Heart left ventricle (tissue), 16 donors: ENCODE measurements at regions of chr1 and their contacts with region 1.

Region 1: GRCh38 chr1:205711104-205712020 is 31.1 kb upstream of the SLC45A3 start:
- DNase-seq: peak in 4 of 5 donors; percentile 40 to 70 (median 62)
- ATAC-seq: peak; percentile 43 to 83 (median 80)
- H3K4me3 ChIP-seq: no peak overlapping the region
- H3K27ac ChIP-seq: no peak overlapping the region
- H3K4me1 ChIP-seq: peaks cover 0 to 28% (median 10%) of the 10 kb centered on the region in 12 donors
- H3K27me3 ChIP-seq: no peaks in the 10 kb centered on the region
- CTCF ChIP-seq: peak; percentile 77 to 95 (median 88)
- POLR2A ChIP-seq: no peak

Region 2: GRCh38 chr1:204446370-204447111 is 1264.8 kb before region 1 on chr1:
- intact Hi-C with region 1: no loop called
- DNase-seq: peak; percentile 71 to 85 (median 83)
- ATAC-seq: peak; percentile 39 to 75 (median 72)
- H3K4me3 ChIP-seq: no peak overlapping the region
- H3K27ac ChIP-seq: peak overlapping the region in 9 of 12 donors; percentile 19 to 62 (median 54)
- H3K4me1 ChIP-seq: peaks cover 7 to 75% (median 52%) of the 10 kb centered on the region in 12 donors
- H3K27me3 ChIP-seq: no peaks in the 10 kb centered on the region
- CTCF ChIP-seq: peak; percentile 70 to 84 (median 79)
- POLR2A ChIP-seq: no peak

Region 3: DNA sequence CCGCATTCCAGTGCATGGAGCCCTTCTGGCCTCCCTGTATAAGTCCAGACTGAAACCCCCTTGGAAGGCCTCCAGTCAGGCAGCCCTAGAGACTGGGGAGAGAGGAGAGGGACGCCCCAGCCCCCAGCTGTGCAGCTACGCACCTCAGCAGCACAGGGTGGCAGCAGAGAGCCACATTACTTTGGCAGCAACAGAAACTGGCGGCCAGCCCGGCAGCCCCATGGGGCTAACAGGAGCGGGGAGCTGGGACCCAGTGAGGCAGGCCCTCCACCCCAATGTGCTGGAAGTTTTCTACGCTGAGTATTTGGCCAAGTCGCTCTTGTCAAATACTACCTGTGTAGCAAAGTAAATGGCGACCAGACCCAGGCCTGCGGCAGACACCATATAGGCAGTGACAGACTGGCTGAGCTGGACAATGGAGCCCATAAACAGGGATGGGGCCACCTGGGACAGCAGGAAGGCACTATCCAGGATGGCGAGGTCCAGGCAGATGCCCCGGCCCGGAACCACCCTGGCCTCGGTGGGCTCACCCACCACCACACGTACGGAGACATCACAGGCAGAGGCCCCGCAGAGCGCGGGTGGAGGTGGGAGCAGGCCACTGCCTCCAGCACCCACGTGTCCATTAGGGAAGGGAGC is 52.3 kb before region 1 on chr1:
- intact Hi-C with region 1: loop called (anchors 1 to 5 kb)
- DNase-seq: peak; percentile 78 to 90 (median 83)
- ATAC-seq: peak; percentile 71 to 88 (median 80)
- H3K4me3 ChIP-seq: no peak overlapping the region
- H3K27ac ChIP-seq: no peak overlapping the region
- H3K4me1 ChIP-seq: peaks cover 0 to 16% (median 6%) of the 10 kb centered on the region in 12 donors
- H3K27me3 ChIP-seq: no peaks in the 10 kb centered on the region
- CTCF ChIP-seq: peak; percentile 77 to 91 (median 85)
- POLR2A ChIP-seq: no peak

Region 4: DNA sequence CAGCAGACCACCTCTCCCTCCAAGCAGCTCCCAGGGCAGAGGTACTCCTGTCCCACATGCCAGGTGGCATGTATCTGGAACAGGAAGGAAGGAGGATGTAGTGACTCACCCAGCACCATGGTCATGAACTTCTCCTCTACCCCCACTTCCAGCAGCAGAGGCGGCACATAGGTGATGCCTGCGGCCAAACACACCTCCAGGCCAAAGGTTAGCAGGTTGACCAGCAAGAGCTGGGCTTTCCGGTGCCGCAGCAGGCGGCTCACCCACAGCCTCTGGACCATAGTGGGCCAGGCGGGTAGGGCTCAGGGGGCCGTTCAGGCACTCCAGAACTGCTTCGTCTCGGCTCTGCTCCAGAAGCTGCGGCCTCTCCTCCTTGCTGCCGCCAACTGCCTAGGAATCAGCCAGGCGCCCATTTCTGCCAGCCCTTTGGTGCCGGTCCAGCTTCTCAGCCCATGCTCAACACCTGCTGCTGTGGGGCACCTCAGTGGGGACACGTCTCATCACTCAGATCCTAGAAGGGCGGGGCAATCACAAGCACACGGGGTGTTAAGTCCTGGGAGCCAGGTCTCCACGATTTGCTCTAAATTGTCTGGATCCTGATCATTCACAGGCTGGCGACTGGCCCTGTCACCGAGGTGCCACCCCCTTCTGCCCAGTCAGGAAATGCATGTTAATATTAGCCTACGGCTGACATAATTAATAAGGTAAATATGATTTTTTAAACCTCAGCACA is 46.8 kb before region 1 on chr1:
- intact Hi-C with region 1: loop called in 9 of 10 experiments (anchors 1 to 5 kb)
- DNase-seq: no peak
- ATAC-seq: no peak
- H3K4me3 ChIP-seq: no peak overlapping the region
- H3K27ac ChIP-seq: no peak overlapping the region
- H3K4me1 ChIP-seq: peaks cover 0 to 25% (median 2%) of the 10 kb centered on the region in 12 donors
- H3K27me3 ChIP-seq: no peaks in the 10 kb centered on the region
- CTCF ChIP-seq: no peak
- POLR2A ChIP-seq: no peak

Region 5: GRCh38 chr1:205678286-205679111 is 32.9 kb before region 1 on chr1:
- intact Hi-C with region 1: loop called in 1 of 10 experiments (anchors 2 kb)
- DNase-seq: peak; percentile 47 to 69 (median 49)
- ATAC-seq: peak; percentile 26 to 64 (median 56)
- H3K4me3 ChIP-seq: peak overlapping the region in 11 of 12 donors; percentile 2 to 83 (median 65)
- H3K27ac ChIP-seq: peak overlapping the region in 11 of 12 donors; percentile 8 to 78 (median 62)
- H3K4me1 ChIP-seq: peaks cover 4 to 39% (median 26%) of the 10 kb centered on the region in 12 donors
- H3K27me3 ChIP-seq: peaks cover 0 to 6% (median 0%) of the 10 kb centered on the region in 9 donors
- CTCF ChIP-seq: no peak
- POLR2A ChIP-seq: no peak